ENCODE measurements at regions of chrX and their contacts with region 1.

Region 1: GRCh38 chrX:24306440-24306839 is 7.4 kb downstream of the SUPT20HL2 start:
- DNase-seq: no peak
- H3K4me3 Mint-ChIP-seq: no peak overlapping the region
- H3K27ac Mint-ChIP-seq: no peak overlapping the region
- H3K4me1 Mint-ChIP-seq: peaks cover 24% of the 10 kb centered on the region
- H3K27me3 Mint-ChIP-seq: no peaks in the 10 kb centered on the region

Region 2: DNA sequence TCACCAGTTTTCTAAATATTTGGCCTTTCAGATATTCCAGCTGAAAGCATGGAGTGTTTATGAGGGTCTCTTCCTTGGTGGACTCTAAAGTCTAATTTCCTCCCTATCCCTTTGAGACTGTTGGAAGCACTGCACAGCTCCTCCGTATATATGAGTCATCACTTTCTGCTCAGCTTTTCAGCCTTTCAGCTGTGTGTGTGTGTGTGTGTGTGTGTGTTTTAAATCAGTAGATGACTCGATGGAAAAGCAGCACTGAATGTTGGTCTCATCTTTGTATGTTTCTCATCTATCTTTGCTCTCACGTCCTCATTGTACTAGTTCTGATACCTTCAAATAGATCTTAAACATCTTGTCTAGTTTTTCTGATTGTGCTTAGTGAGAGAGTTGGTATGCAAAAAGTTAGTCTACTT is 75.3 kb before region 1 on chrX:
- intact Hi-C with region 1: no loop called
- DNase-seq: no peak
- H3K4me3 Mint-ChIP-seq: no peak overlapping the region
- H3K27ac Mint-ChIP-seq: no peak overlapping the region
- H3K4me1 Mint-ChIP-seq: peaks cover 5% of the 10 kb centered on the region
- H3K27me3 Mint-ChIP-seq: peaks cover 3% of the 10 kb centered on the region

Region 3: GRCh38 chrX:24343719-24344118 is 37.3 kb after region 1 on chrX:
- intact Hi-C with region 1: loop called (anchors 2 kb)
- DNase-seq: no peak
- H3K4me3 Mint-ChIP-seq: no peak overlapping the region
- H3K27ac Mint-ChIP-seq: peak overlapping the region; percentile 32
- H3K4me1 Mint-ChIP-seq: peaks cover 38% of the 10 kb centered on the region
- H3K27me3 Mint-ChIP-seq: peaks cover 3% of the 10 kb centered on the region

Measured in activated T-helper 1 cell treated with anti-CD3 and anti-CD28 coated beads, Interleukin-12 subunit alpha, Interleukin-12 subunit beta, Interleukin-2, Interleukin-4 antibody, amounts not matched to agents 30 ng/mL and 10 ng/mL and 1 ng/mL, durations not matched to agents 14 hours and 24 hours and 36 hours (primary cell).